ENCODE measurements at regions of chr1 and their contacts with region 1.

Region 1: GRCh38 chr1:212070720-212071302 is 35.3 kb downstream of the DTL start:
- DNase-seq: peak in 4 of 5 donors; percentile 49 to 55 (median 52)
- H3K4me3 ChIP-seq: no peak overlapping the region
- H3K4me3 Mint-ChIP-seq: no peak overlapping the region
- H3K27ac ChIP-seq: no peak overlapping the region
- H3K27ac Mint-ChIP-seq: no peak overlapping the region
- H3K4me1 ChIP-seq: no peaks in the 10 kb centered on the region
- H3K4me1 Mint-ChIP-seq: peaks cover 0 to 3% (median 1%) of the 10 kb centered on the region in 4 donors
- H3K27me3 ChIP-seq: no peaks in the 10 kb centered on the region
- H3K27me3 Mint-ChIP-seq: no peaks in the 10 kb centered on the region

Region 2: GRCh38 chr1:211698161-211699026 is 372.4 kb before region 1 on chr1:
- CTCF ChIA-PET with region 1: interaction called, 12 read pairs
- POLR2A ChIA-PET with region 1: no interaction called
- intact Hi-C with region 1: no loop called
- DNase-seq: peak; percentile 72 to 81 (median 73)
- H3K4me3 ChIP-seq: peak overlapping the region in 1 of 2 donors; percentile 30
- H3K4me3 Mint-ChIP-seq: peak overlapping the region; percentile 66 to 82 (median 78)
- H3K27ac ChIP-seq: no peak overlapping the region
- H3K27ac Mint-ChIP-seq: no peak overlapping the region
- H3K4me1 ChIP-seq: peaks cover 21% of the 10 kb centered on the region
- H3K4me1 Mint-ChIP-seq: peaks cover 8 to 26% (median 19%) of the 10 kb centered on the region in 4 donors
- H3K27me3 ChIP-seq: no peaks in the 10 kb centered on the region
- H3K27me3 Mint-ChIP-seq: peaks cover 0 to 3% of the 10 kb centered on the region in 2 donors

Region 3: DNA sequence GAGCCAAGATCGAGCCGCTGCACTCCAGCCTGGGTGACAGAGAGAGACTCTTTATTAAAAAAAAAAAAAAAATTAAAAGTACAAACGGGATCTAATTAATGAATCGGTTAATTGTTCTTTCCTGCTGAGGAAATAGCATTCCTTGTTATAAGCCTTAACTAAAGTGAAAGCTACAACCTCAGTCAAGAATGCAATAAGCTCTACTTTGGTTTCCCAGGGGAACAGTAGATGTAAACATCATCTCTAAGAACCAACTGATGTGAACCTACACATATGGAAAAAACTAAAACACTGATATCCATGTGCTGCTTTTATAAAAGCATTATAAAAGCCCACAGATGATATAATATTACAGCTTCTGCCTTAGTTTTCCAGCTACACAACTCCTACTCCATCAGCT is 282.2 kb before region 1 on chr1:
- CTCF ChIA-PET with region 1: no interaction called
- POLR2A ChIA-PET with region 1: no interaction called
- intact Hi-C with region 1: no loop called
- DNase-seq: no peak
- H3K4me3 ChIP-seq: no peak overlapping the region
- H3K4me3 Mint-ChIP-seq: no peak overlapping the region
- H3K27ac ChIP-seq: no peak overlapping the region
- H3K27ac Mint-ChIP-seq: no peak overlapping the region
- H3K4me1 ChIP-seq: no peaks in the 10 kb centered on the region
- H3K4me1 Mint-ChIP-seq: peaks cover 3 to 5% (median 4%) of the 10 kb centered on the region in 4 donors
- H3K27me3 ChIP-seq: no peaks in the 10 kb centered on the region
- H3K27me3 Mint-ChIP-seq: no peaks in the 10 kb centered on the region

Region 4: DNA sequence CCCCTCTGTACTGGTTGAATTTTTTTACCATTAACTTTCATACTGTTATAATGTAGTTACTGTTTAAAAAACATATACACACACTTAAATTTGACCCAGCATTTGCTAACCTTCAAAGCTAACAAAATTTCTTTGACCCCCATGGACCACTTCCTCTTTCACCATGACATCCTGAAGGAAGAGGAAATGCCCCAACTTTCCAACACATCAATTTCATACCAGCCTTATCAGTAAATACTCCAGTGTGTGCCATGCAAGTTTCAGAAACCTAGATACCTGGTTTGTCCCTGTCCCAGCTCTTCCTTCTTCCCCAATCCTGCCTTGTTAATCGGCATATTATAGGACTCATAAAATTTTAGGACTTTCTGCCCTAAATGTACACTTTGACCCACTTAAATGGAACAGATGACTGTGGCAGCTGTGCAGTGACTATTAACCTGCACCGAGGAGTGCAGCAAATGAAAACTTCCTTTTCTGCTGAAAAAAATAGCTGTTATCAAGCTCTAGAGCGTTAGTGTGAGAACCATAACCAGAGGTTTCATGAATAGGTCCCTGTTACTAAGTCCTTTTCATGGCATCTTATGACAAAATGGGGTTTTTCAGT is 18.9 kb after region 1 on chr1:
- CTCF ChIA-PET with region 1: interaction called, 15 read pairs
- POLR2A ChIA-PET with region 1: no interaction called
- intact Hi-C with region 1: no loop called
- DNase-seq: no peak
- H3K4me3 ChIP-seq: no peak overlapping the region
- H3K4me3 Mint-ChIP-seq: peak overlapping the region in 1 of 8 donors; percentile 0
- H3K27ac ChIP-seq: no peak overlapping the region
- H3K27ac Mint-ChIP-seq: peak overlapping the region in 1 of 7 donors; percentile 38
- H3K4me1 ChIP-seq: peaks cover 5% of the 10 kb centered on the region
- H3K4me1 Mint-ChIP-seq: peaks cover 7 to 12% (median 10%) of the 10 kb centered on the region in 4 donors
- H3K27me3 ChIP-seq: no peaks in the 10 kb centered on the region
- H3K27me3 Mint-ChIP-seq: no peaks in the 10 kb centered on the region

Region 5: DNA sequence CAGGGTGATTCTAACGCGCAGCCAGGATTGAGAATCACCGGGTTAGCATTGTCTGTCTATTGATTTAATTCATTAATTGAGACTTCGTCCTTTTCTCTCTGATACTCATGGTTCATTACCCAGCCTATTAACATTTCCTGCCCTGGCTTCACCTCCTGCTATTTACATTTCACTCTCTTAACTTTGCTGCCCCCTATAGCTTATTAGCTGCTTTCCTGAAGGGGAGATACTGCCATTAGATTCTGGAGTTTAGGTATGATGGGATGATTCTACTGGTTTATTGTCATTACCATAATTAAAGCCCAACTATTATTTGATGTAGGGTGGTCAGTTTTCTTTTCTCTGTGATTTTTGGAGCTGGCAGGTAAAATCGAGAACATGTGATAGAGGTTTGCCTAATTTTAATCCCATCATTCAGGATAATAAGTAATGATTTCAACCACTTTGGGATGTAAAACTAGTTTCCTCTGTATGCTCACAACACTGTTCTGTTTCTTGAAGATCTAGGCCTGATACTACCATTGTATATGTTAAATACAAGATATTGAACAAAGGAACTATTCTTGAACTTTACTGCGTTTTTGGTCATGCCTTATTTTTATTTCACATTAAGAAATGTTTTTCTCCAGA is 220.8 kb after region 1 on chr1:
- CTCF ChIA-PET with region 1: interaction called, 162 read pairs
- POLR2A ChIA-PET with region 1: interaction called, 21 read pairs
- intact Hi-C with region 1: loop called (anchors 1 kb)
- DNase-seq: peak in 4 of 5 donors; percentile 57 to 70 (median 64)
- H3K4me3 ChIP-seq: no peak overlapping the region
- H3K4me3 Mint-ChIP-seq: peak overlapping the region; percentile 27 to 70 (median 60)
- H3K27ac ChIP-seq: no peak overlapping the region
- H3K27ac Mint-ChIP-seq: peak overlapping the region in 4 of 7 donors; percentile 0 to 54 (median 16)
- H3K4me1 ChIP-seq: peaks cover 87% of the 10 kb centered on the region
- H3K4me1 Mint-ChIP-seq: peaks cover 66 to 91% (median 81%) of the 10 kb centered on the region in 4 donors
- H3K27me3 ChIP-seq: no peaks in the 10 kb centered on the region
- H3K27me3 Mint-ChIP-seq: no peaks in the 10 kb centered on the region

Region 6: GRCh38 chr1:212341090-212341489 is 270.3 kb after region 1 on chr1:
- CTCF ChIA-PET with region 1: interaction called, 15 read pairs
- POLR2A ChIA-PET with region 1: no interaction called
- intact Hi-C with region 1: no loop called
- DNase-seq: no peak
- H3K4me3 ChIP-seq: no peak overlapping the region
- H3K4me3 Mint-ChIP-seq: no peak overlapping the region
- H3K27ac ChIP-seq: no peak overlapping the region
- H3K27ac Mint-ChIP-seq: peak overlapping the region in 5 of 7 donors; percentile 1 to 47 (median 42)
- H3K4me1 ChIP-seq: no peaks in the 10 kb centered on the region
- H3K4me1 Mint-ChIP-seq: peaks cover 15 to 28% (median 17%) of the 10 kb centered on the region in 4 donors
- H3K27me3 ChIP-seq: no peaks in the 10 kb centered on the region
- H3K27me3 Mint-ChIP-seq: no peaks in the 10 kb centered on the region

Region 7: DNA sequence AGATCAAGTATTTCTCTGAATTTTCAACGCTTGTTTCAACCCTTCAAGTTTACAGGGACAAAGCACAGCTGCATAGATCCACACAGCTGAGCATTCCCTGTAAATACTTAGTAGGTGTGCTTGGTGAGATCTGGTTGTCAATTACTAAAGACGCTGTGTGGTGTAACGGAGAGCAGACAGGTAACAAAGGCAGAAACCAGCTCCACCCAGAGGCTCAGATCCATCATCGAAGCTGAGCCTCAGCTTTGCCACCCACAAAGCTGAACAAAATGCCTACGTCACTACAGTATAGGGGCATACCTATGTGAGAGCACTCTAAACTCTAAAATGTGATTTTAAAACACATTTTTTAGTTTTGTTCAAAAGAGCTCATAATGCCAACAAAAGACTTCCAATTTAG is 305.2 kb after region 1 on chr1:
- CTCF ChIA-PET with region 1: interaction called, 11 read pairs
- POLR2A ChIA-PET with region 1: no interaction called
- intact Hi-C with region 1: no loop called
- DNase-seq: no peak
- H3K4me3 ChIP-seq: no peak overlapping the region
- H3K4me3 Mint-ChIP-seq: no peak overlapping the region
- H3K27ac ChIP-seq: no peak overlapping the region
- H3K27ac Mint-ChIP-seq: peak overlapping the region in 4 of 7 donors; percentile 4 to 45 (median 20)
- H3K4me1 ChIP-seq: no peaks in the 10 kb centered on the region
- H3K4me1 Mint-ChIP-seq: no peaks in the 10 kb centered on the region
- H3K27me3 ChIP-seq: no peaks in the 10 kb centered on the region
- H3K27me3 Mint-ChIP-seq: no peaks in the 10 kb centered on the region